ENCODE measurements at regions of chr10 and their contacts with region 1.

Region 1: GRCh38 chr10:3435671-3436070 is 263.1 kb upstream of the PITRM1 start:
- DNase-seq: peak; percentile 93
- H3K4me3 ChIP-seq: no peak overlapping the region
- H3K27ac ChIP-seq: peak overlapping the region; percentile 19
- H3K4me1 ChIP-seq: peaks cover 13% of the 10 kb centered on the region
- H3K27me3 ChIP-seq: no peaks in the 10 kb centered on the region
- CTCF ChIP-seq: no peak
- POLR2A ChIP-seq: no peak

Region 2: GRCh38 chr10:2641028-2641427 is 794.6 kb before region 1 on chr10:
- CTCF ChIA-PET with region 1: no interaction called
- POLR2A ChIA-PET with region 1: no interaction called
- dilution Hi-C with region 1: no loop called
- intact Hi-C with region 1: no loop called
- DNase-seq: no peak
- H3K4me3 ChIP-seq: no peak overlapping the region
- H3K27ac ChIP-seq: no peak overlapping the region
- H3K4me1 ChIP-seq: no peaks in the 10 kb centered on the region
- H3K27me3 ChIP-seq: no peaks in the 10 kb centered on the region
- CTCF ChIP-seq: no peak
- POLR2A ChIP-seq: no peak

Region 3: DNA sequence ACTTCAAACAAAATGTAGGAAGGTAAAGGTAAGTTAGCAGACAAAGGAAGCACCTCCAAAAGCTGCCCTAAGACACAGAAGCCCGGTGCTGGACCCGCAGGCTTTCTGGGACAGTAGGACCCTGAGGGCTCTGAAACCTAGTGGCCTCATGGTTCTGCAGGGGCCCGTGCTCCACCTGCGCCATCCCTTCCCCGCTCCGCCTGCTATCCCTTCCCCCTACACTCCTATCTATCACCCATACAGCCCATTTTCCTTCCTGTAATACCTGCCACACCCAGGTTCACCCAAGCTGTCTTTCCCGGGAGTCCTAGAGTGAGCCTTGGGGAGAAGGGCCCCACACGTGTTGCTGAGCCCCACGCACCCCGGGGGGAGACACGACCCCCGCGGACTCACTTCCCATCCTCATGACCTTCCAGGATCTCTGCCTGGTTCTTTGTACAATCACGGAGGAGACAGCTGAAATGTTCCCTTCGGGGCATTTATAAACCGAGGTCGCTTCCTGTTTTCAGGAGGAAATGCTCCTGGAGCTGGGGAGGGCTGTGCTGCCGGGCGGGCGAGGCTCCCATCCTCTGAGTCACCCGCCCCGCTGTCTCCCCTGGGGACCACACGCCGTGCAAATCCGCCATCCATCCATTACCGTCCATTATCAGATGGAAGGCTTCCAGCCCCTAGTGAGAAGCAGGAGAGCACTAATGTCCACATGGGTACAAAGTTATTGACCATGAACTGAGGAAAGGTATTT is 11.4 kb before region 1 on chr10:
- CTCF ChIA-PET with region 1: interaction called, 6 read pairs
- POLR2A ChIA-PET with region 1: no interaction called
- dilution Hi-C with region 1: no loop called
- intact Hi-C with region 1: loop called (anchors 1 kb)
- DNase-seq: peak; percentile 45
- H3K4me3 ChIP-seq: no peak overlapping the region
- H3K27ac ChIP-seq: peak overlapping the region; percentile 72
- H3K4me1 ChIP-seq: peaks cover 38% of the 10 kb centered on the region
- H3K27me3 ChIP-seq: no peaks in the 10 kb centered on the region
- CTCF ChIP-seq: no peak
- POLR2A ChIP-seq: no peak

Measured in endothelial cell of umbilical vein (primary cell).